PC-9 (cell line): ENCODE measurements at regions of chr14 and their contacts with region 1.

Region 1: DNA sequence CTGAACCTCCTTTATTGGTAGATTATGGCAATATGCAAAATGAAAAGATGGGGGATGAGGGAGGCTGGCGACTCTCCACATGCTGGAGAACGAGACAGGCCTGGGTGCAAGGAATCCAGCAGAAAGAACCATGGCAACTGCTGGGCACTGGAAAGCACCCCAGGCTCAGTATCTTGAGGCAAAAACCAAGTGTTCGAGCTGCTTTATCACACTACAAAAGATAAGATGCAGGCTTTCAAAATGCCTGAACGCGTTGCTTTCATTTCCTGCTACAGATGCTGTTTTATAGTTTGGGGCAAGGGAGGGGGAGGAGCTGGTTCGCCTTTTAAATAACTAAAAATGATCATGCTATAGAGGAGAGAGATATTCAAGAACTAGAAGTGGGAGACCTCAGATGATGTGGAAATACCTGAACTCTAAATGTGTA is 38.9 kb downstream of the NIN start:
- DNase-seq: no peak
- H3K4me3 ChIP-seq: no peak overlapping the region
- H3K27ac ChIP-seq: no peak overlapping the region
- H3K4me1 ChIP-seq: no peaks in the 10 kb centered on the region
- H3K27me3 ChIP-seq: no peaks in the 10 kb centered on the region
- CTCF ChIP-seq: no peak

Region 2: DNA sequence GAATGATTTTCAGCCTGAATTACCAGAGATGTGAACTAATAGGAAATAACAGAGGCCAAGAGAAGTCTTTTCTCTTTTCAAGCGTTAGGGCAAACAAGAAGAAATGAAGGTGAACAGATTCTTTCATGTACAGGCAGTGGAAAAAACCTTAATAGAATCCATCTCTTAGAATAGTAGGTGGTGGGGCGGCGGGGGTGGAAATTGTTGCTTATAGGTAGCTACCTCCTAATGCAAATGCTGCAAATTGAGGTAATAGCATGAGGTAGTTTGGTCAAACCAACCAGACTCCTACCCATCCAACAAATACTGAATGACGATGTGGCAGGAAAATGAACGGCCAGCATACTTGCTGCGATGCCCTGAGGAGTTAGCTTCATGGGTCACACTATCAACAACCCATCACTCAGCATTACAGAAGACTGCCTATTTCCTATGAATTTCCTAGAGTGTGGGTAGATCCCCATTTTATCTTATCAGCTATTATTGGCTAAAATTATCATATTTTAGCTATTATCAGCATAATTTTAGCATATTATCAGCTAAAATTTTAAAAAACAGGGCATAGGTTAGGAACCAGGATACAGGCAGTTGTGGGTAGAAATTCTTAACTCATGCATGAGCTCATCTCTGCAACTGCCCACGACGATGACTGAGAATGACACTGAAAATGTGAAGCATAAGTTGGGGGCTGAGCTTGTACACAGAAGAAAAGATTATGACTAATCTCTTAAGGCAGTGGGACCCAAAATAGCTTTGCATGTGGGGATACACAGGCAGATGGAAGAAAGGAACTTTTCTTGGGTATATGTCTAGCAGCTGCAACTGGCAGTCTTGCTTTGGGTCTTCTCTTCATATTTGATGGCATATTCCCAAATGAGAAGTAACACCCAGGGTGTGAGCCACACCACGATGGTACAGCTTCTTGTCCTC is 29.8 kb before region 1 on chr14:
- CTCF ChIA-PET with region 1: no interaction called
- POLR2A ChIA-PET with region 1: interaction called, 14 read pairs
- intact Hi-C with region 1: no loop called
- DNase-seq: no peak
- H3K4me3 ChIP-seq: no peak overlapping the region
- H3K27ac ChIP-seq: no peak overlapping the region
- H3K4me1 ChIP-seq: no peaks in the 10 kb centered on the region
- H3K27me3 ChIP-seq: no peaks in the 10 kb centered on the region
- CTCF ChIP-seq: no peak